Activated CD8-positive, alpha-beta memory T cell treated with anti-CD3 and anti-CD28 coated beads, Interleukin-2, amount 10 ng/mL, durations not matched to agents 7 days and 5 days (primary cell): ENCODE measurements at regions of chr3 and their contacts with region 1.

Region 1: GRCh38 chr3:36957862-36958686 is 13.2 kb upstream of the TRANK1 start:
- DNase-seq: no peak
- ATAC-seq: no peak
- H3K4me3 Mint-ChIP-seq: no peak overlapping the region
- H3K27ac Mint-ChIP-seq: no peak overlapping the region
- H3K4me1 Mint-ChIP-seq: peaks cover 12% of the 10 kb centered on the region
- H3K27me3 Mint-ChIP-seq: no peaks in the 10 kb centered on the region

Region 2: DNA sequence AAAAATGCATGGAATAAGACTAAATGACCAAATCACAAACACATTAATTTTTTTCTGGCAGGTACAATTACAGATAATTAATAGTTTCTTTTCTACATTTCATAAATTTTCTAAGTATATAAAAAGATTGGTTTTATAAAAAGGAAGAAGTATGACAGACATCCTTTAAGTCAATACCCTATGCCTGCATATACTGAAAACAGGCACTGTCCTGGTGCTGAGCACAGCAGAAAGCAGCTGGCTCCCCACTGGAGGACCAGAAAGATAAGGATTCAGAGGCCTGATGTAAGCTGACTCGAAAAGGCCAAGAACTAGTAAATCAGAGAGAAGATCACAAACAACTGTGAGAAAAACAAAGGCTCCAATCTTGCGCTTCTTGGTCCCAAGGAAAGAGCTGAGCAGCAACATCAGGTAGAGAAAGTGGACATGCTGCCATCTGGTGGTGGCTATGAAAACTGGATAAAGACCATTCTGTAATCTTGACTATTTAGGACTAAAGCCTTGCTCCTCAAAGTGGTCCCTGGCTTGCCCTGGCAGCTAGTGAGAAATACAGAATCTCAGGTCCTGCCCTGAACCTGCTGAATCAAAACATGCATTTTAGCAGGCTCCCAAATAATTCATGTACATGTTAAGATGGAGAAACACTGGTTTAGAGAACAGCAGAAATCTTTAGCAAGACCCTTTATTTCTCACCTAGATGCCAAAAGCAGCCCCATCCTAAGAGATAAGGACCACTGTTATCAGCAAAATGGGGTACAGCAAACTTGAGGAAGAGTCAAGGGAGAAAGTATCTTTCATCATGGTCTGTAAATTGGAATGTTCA is 89.2 kb before region 1 on chr3:
- CTCF ChIA-PET with region 1: interaction called, 11 read pairs
- DNase-seq: peak; percentile 62
- ATAC-seq: peak; percentile 87
- H3K4me3 Mint-ChIP-seq: no peak overlapping the region
- H3K27ac Mint-ChIP-seq: no peak overlapping the region
- H3K4me1 Mint-ChIP-seq: peaks cover 12% of the 10 kb centered on the region
- H3K27me3 Mint-ChIP-seq: no peaks in the 10 kb centered on the region

Region 3: GRCh38 chr3:36911990-36912804 is 45.9 kb before region 1 on chr3:
- CTCF ChIA-PET with region 1: interaction called, 65 read pairs
- DNase-seq: peak; percentile 67
- ATAC-seq: peak; percentile 88
- H3K4me3 Mint-ChIP-seq: peak overlapping the region; percentile 74
- H3K27ac Mint-ChIP-seq: peak overlapping the region; percentile 95
- H3K4me1 Mint-ChIP-seq: peaks cover 42% of the 10 kb centered on the region
- H3K27me3 Mint-ChIP-seq: no peaks in the 10 kb centered on the region

Region 4: DNA sequence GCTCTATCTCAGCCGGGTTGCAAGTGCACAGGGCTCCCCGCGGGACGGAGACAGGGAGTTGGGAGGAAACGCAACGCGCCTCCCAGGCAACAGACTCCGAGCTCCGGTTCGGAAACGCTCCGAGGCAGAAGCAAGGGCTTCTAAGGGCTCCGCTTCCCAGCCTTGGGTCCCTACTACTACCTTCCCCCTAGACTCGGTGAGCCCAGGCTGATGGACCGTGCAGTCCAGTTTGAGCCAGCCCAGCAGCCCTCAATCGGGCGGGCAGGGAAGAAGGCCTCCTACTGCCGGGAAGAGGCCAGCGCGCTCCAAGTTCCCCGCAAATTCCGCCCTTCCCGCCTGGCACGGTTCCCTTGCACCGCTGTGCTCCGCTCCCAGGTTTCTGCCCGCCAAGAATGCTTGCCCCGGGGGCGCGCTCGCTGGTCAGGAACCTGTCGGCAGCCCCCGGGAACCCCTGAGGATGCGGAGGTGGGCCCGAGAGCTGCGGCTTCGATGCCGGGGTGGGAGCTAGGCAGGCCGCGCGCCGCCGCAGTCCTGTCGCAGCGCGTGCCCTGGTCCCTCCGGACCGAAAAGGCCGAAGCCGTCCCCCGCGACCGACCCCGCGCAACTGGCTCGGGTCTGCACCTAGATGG is 13.9 kb before region 1 on chr3:
- CTCF ChIA-PET with region 1: interaction called, 37 read pairs
- DNase-seq: peak; percentile 44
- ATAC-seq: peak; percentile 50
- H3K4me3 Mint-ChIP-seq: peak overlapping the region; percentile 68
- H3K27ac Mint-ChIP-seq: no peak overlapping the region
- H3K4me1 Mint-ChIP-seq: peaks cover 13% of the 10 kb centered on the region
- H3K27me3 Mint-ChIP-seq: peaks cover 3% of the 10 kb centered on the region

Region 5: GRCh38 chr3:36988356-36988755 is 30.3 kb after region 1 on chr3:
- CTCF ChIA-PET with region 1: interaction called, 15 read pairs
- DNase-seq: no peak
- ATAC-seq: no peak
- H3K4me3 Mint-ChIP-seq: peak overlapping the region; percentile 67
- H3K27ac Mint-ChIP-seq: peak overlapping the region; percentile 11
- H3K4me1 Mint-ChIP-seq: peaks cover 38% of the 10 kb centered on the region
- H3K27me3 Mint-ChIP-seq: no peaks in the 10 kb centered on the region

Region 6: DNA sequence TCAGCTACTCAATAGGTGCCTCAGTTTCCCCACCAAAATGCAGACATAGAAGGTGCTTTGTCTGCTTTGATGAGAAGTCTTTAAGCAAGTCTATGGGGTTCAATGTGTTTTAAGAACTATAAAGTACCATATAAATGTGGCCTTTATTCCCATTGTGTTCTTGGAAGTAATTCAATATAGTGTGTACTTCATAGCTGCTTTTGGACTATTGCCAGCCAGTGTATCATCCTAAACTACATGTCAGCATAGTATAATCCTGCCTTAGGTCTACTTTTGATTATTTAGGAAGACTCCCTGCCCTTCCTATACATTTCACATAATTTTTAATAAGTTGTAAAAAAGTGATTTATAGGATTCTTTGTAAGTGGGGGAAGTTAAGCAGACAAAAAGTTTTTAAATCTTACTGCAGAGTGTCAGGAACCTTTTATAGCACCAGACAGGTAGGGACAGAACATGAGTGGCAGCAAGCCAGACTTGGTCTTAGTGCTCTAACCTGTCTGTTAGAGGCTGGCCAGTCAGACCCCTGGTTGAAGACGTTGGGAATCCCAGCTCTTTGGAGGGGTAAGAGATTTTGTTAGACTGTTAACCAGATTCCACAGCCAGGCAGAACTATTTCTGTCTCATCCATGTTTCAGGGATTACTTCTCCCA is 83.6 kb after region 1 on chr3:
- CTCF ChIA-PET with region 1: no interaction called
- DNase-seq: no peak
- ATAC-seq: no peak
- H3K4me3 Mint-ChIP-seq: no peak overlapping the region
- H3K27ac Mint-ChIP-seq: no peak overlapping the region
- H3K4me1 Mint-ChIP-seq: no peaks in the 10 kb centered on the region
- H3K27me3 Mint-ChIP-seq: no peaks in the 10 kb centered on the region

Region 7: GRCh38 chr3:37174532-37175126 is 216.6 kb after region 1 on chr3 and contains the start of gene LRRFIP2:
- CTCF ChIA-PET with region 1: no interaction called
- DNase-seq: peak; percentile 53
- ATAC-seq: peak; percentile 30
- H3K4me3 Mint-ChIP-seq: peak within 1 kb of the TSS; percentile 88
- H3K27ac Mint-ChIP-seq: peak within 1 kb of the TSS; percentile 80
- H3K4me1 Mint-ChIP-seq: peaks cover 54% of the 10 kb centered on the region
- H3K27me3 Mint-ChIP-seq: no peaks in the 10 kb centered on the region
- total RNA-seq, gene LRRFIP2: 38.1 to 47.9 TPM

Region 8: DNA sequence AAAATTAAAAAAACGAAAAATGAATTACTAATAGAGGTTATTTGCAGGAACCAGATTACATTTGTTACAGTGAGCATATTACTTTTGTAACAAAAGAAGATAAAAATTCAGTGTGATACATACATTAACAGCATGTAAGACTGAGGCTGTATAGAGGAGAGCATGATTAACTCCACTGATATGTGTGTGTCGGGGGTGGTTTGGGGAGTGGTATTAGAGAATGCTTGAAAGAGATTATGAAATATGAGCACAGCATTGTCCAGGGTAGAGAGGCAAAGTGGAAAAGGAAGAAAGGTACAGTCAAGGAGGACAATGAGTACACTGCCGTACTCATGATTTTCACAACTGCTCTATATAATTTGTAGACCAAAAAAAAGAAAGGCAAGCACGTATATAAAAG is 279.2 kb after region 1 on chr3:
- CTCF ChIA-PET with region 1: no interaction called
- DNase-seq: no peak
- ATAC-seq: no peak
- H3K4me3 Mint-ChIP-seq: no peak overlapping the region
- H3K27ac Mint-ChIP-seq: no peak overlapping the region
- H3K4me1 Mint-ChIP-seq: peaks cover 3% of the 10 kb centered on the region
- H3K27me3 Mint-ChIP-seq: peaks cover 4% of the 10 kb centered on the region

Region 9: GRCh38 chr3:37386627-37387230 is 428.7 kb after region 1 on chr3:
- CTCF ChIA-PET with region 1: no interaction called
- DNase-seq: no peak
- ATAC-seq: no peak
- H3K4me3 Mint-ChIP-seq: no peak overlapping the region
- H3K27ac Mint-ChIP-seq: no peak overlapping the region
- H3K4me1 Mint-ChIP-seq: no peaks in the 10 kb centered on the region
- H3K27me3 Mint-ChIP-seq: no peaks in the 10 kb centered on the region